Pancreas (tissue), 10 donors: ENCODE measurements at regions of chr19 and their contacts with region 1.

Region 1: GRCh38 chr19:49937750-49938381 is 8.6 kb upstream of the NUP62 start:
- DNase-seq: peak; percentile 61 to 96 (median 82)
- ATAC-seq: peak; percentile 89 to 96 (median 91)
- H3K4me3 ChIP-seq: peak overlapping the region in 2 of 4 donors; percentile 8 to 35
- H3K27ac ChIP-seq: peak overlapping the region in 1 of 4 donors; percentile 40
- H3K4me1 ChIP-seq: peaks cover 0 to 16% (median 3%) of the 10 kb centered on the region in 3 donors
- H3K27me3 ChIP-seq: no peaks in the 10 kb centered on the region
- CTCF ChIP-seq: peak; percentile 90 to 93 (median 91)

Region 2: GRCh38 chr19:49614096-49614833 is 323.6 kb before region 1 on chr19:
- intact Hi-C with region 1: no loop called
- DNase-seq: no peak
- ATAC-seq: peak in 2 of 4 donors; percentile 36 to 40
- H3K4me3 ChIP-seq: no peak overlapping the region
- H3K27ac ChIP-seq: no peak overlapping the region
- H3K4me1 ChIP-seq: no peaks in the 10 kb centered on the region
- H3K27me3 ChIP-seq: no peaks in the 10 kb centered on the region
- CTCF ChIP-seq: no peak

Region 3: DNA sequence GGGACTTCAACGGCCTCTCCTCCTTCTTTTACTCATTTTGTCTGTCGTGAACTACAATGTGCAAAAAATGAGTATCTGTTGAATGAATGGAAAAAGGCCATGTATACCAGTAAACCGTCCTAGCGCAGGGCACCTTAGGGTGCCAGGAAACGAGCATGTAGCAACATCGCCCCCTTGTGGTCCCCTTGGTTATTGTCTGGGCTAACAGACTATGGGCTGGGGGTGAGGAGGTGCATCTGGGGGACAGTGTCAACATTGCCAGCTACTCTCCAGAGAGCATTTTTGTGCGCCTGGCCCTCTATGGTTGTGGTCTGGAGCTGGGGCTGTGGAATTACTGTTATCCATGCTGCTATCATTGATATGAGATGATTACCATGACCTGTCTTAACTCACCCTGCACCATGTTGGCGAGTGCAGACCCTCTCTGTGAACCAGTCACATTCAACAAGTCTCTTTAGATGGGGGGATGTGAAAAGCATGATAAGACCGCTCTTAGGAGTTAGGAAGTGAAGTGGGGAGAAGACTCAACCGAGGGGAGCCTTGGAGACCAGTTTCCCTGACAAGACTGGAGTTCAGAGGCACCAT is 45.9 kb after region 1 on chr19:
- intact Hi-C with region 1: loop called in 2 of 3 experiments (anchors 2 to 5 kb)
- DNase-seq: peak in 5 of 6 donors; percentile 35 to 88 (median 68)
- ATAC-seq: peak; percentile 53 to 74 (median 70)
- H3K4me3 ChIP-seq: no peak overlapping the region
- H3K27ac ChIP-seq: no peak overlapping the region
- H3K4me1 ChIP-seq: peaks cover 0 to 9% (median 0%) of the 10 kb centered on the region in 3 donors
- H3K27me3 ChIP-seq: no peaks in the 10 kb centered on the region
- CTCF ChIP-seq: peak; percentile 69 to 89 (median 80)

Region 4: GRCh38 chr19:50003810-50004419 is 66.0 kb after region 1 on chr19:
- intact Hi-C with region 1: no loop called
- DNase-seq: no peak
- ATAC-seq: peak; percentile 23 to 83 (median 74)
- H3K4me3 ChIP-seq: no peak overlapping the region
- H3K27ac ChIP-seq: no peak overlapping the region
- H3K4me1 ChIP-seq: no peaks in the 10 kb centered on the region
- H3K27me3 ChIP-seq: no peaks in the 10 kb centered on the region
- CTCF ChIP-seq: no peak